ENCODE measurements at regions of chr13 and their contacts with region 1.

Region 1: GRCh38 chr13:75687150-75687763 is 51.1 kb downstream of the LMO7 start:
- DNase-seq: no peak
- H3K4me3 ChIP-seq: no peak overlapping the region
- H3K27ac ChIP-seq: no peak overlapping the region
- H3K4me1 ChIP-seq: no peaks in the 10 kb centered on the region
- H3K27me3 ChIP-seq: no peaks in the 10 kb centered on the region
- CTCF ChIP-seq: peak; percentile 45

Region 2: DNA sequence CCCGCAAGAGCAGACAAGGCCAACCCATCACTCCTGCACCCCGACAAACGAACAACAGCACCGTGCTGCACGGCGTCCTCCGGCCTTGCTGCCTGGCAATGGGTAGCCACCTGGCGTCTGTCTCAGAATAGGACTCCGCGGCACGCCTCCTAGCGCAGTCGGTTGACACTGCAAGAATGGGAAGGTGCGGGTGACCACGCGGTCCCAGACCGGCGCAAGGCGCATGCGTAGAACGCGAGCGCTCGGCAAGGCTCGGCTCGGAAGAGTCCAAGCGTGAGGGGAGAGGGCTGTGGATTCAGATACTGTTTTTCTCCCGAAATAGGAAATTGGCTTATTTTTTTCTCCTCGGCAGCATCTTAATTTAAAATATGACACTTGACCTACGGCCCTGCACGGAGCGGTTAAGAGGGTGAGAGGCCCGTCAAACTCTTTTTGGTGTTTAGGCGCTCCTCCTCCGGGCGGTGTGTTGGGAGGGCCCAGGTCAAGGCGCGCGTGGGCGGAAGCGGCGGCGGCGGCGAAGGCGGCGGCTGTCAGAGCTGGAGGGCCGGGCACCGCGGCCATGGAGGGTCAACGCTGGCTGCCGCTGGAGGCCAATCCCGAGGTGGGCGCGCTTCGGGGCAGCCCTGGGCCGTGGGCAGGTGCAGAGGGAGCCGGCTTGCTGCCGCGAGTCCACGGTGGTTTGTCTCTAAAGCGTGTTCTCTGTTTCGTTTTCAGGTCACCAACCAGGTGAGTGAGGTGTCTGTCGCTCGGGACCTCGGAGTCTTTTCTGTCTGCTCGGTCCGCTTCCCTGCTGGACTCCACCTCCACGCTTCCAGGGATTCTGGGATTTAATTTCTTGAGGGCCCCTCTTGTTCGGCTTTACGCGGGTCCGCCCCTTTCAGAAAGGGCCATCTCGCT is 137.7 kb before region 1 on chr13 and contains the start of gene UCHL3:
- intact Hi-C with region 1: no loop called
- DNase-seq: peak; percentile 98
- H3K4me3 ChIP-seq: peak within 1 kb of the TSS; percentile 71
- H3K27ac ChIP-seq: peak within 1 kb of the TSS; percentile 70
- H3K4me1 ChIP-seq: no peaks in the 10 kb centered on the region
- H3K27me3 ChIP-seq: no peaks in the 10 kb centered on the region
- CTCF ChIP-seq: peak; percentile 81
- total RNA-seq, gene UCHL3: 42.9 to 50.7 TPM

Region 3: GRCh38 chr13:75739244-75739868 is 52.1 kb after region 1 on chr13:
- intact Hi-C with region 1: no loop called
- DNase-seq: no peak
- H3K4me3 ChIP-seq: no peak overlapping the region
- H3K27ac ChIP-seq: no peak overlapping the region
- H3K4me1 ChIP-seq: no peaks in the 10 kb centered on the region
- H3K27me3 ChIP-seq: no peaks in the 10 kb centered on the region
- CTCF ChIP-seq: no peak

Region 4: DNA sequence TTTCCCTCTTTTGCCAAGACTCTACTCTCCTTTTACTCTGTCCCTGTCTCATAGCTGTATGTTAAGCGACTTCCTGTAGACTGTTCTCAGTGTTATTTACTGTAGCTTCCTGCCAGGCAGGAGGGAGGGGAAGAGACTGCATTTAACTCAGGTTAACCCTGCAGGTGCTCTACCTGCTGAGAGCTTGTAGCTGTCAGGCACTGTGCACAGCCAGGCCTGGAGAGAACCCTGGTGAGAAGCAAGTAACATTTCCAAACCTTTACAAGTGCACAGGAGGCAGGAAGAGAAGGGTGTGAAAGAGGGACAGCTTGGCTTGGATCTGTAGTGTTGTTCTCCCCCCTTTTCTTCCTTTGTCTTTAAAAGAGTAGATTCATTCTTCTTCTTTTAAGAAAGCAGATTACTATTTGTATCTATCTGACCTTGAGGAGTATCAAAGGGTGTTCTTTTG is 115.9 kb after region 1 on chr13:
- intact Hi-C with region 1: loop called (anchors 10 kb)
- DNase-seq: peak; percentile 44
- H3K4me3 ChIP-seq: no peak overlapping the region
- H3K27ac ChIP-seq: peak overlapping the region; percentile 56
- H3K4me1 ChIP-seq: no peaks in the 10 kb centered on the region
- H3K27me3 ChIP-seq: no peaks in the 10 kb centered on the region
- CTCF ChIP-seq: no peak

Region 5: DNA sequence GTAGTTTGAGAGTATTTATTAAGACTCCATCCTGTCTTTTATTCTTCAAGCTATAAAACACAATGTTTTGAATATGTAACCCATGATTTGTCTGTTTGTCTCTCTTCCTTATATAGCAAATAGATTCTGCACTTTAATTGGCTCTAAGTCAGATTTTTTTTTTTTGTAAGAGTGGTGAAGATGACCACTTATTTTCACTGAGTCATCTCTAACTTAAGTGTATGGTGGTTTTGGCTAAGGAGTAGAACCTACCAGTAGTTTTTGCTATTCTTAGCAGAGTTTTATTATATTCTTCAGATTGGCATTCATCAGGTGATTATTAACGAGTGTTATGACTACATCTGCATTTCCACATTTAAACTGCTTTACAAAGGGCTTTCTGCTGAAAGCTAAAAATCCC is 143.6 kb after region 1 on chr13:
- intact Hi-C with region 1: loop called (anchors 10 kb)
- DNase-seq: no peak
- H3K4me3 ChIP-seq: no peak overlapping the region
- H3K27ac ChIP-seq: no peak overlapping the region
- H3K4me1 ChIP-seq: no peaks in the 10 kb centered on the region
- H3K27me3 ChIP-seq: no peaks in the 10 kb centered on the region
- CTCF ChIP-seq: no peak

Region 6: GRCh38 chr13:76016799-76017400 is 329.6 kb after region 1 on chr13:
- intact Hi-C with region 1: loop called (anchors 5 kb)
- DNase-seq: peak; percentile 26
- H3K4me3 ChIP-seq: no peak overlapping the region
- H3K27ac ChIP-seq: no peak overlapping the region
- H3K4me1 ChIP-seq: no peaks in the 10 kb centered on the region
- H3K27me3 ChIP-seq: no peaks in the 10 kb centered on the region
- CTCF ChIP-seq: peak; percentile 22

Region 7: GRCh38 chr13:76175961-76176725 is 488.9 kb after region 1 on chr13:
- intact Hi-C with region 1: no loop called
- DNase-seq: no peak
- H3K4me3 ChIP-seq: no peak overlapping the region
- H3K27ac ChIP-seq: no peak overlapping the region
- H3K4me1 ChIP-seq: no peaks in the 10 kb centered on the region
- H3K27me3 ChIP-seq: no peaks in the 10 kb centered on the region
- CTCF ChIP-seq: no peak

Region 8: DNA sequence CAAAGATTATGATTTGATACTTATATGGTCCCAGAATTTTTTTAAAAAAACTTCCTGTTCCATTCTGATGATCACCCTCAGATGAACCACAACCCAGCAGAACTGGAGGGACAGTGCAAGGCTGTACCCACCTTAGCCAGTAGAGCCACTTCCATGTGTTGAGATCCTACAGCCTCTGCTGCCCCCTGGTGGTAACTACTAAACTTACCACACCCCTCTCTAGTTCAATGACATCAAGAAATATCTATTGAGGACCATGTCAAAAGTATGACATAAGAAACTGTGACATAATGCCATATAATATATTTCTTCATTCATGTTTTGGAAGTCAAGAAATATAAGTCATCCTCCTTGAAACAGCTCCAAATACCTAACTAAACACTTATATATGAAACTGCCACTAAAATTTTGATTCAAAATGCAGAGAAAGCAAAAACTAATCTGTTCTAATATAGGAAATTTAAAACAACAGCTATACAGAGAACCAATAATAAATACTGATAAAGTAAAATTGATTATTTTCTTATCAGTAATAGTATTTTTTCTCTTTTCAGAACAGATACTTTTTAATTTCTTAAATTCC is 786.4 kb after region 1 on chr13:
- intact Hi-C with region 1: loop called (anchors 5 kb)
- DNase-seq: peak; percentile 75
- H3K4me3 ChIP-seq: no peak overlapping the region
- H3K27ac ChIP-seq: no peak overlapping the region
- H3K4me1 ChIP-seq: no peaks in the 10 kb centered on the region
- H3K27me3 ChIP-seq: no peaks in the 10 kb centered on the region
- CTCF ChIP-seq: peak; percentile 87

Measured in colonic mucosa (tissue), 4 donors.